SK-N-SH (cell line): ENCODE measurements at regions of chr12 and their contacts with region 1.

Region 1: DNA sequence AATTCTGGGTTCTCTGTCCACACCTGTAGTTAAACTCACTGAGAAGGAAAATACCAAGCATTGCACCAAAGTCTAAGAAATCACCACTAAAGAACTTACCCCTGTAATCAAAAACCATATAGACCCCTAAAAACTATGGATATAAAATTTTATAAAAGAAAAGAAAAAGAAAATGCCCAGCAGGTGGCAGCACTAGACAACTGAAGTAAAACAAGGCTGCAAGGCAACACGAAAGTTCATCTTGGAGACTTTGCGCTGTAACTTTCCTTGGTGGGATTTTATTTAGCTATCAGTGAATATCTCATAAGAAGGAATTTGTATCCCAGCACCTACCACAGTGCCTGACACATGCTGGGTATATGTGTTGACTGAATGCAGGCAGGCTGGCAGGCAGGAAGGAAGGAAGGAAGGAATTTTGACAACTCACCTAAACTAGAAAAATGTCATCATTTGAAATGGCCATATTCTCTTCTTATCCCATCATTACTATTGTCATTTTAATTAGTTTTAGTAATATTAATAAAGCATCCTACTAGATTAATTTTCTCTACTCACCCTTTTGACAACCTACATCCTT is 68.2 kb upstream of the ETV6 start:
- DNase-seq: peak; percentile 51
- H3K4me3 ChIP-seq: no peak overlapping the region; a peak in 1 of 4 replicates
- H3K27ac ChIP-seq: no peak overlapping the region
- H3K4me1 ChIP-seq: peaks cover 0 to 13% of the 10 kb centered on the region in 2 experiments; a peak in 1 of 4 replicates
- H3K27me3 ChIP-seq: no peaks in the 10 kb centered on the region
- CTCF ChIP-seq: peak; percentile 67
- EP300 ChIP-seq: no peak
- RAD21 ChIP-seq: peak; percentile 95

Region 2: GRCh38 chr12:11595080-11595479 is 13.8 kb after region 1 on chr12:
- CTCF ChIA-PET with region 1: interaction called, 12 read pairs
- POLR2A ChIA-PET with region 1: no interaction called
- DNase-seq: no peak
- H3K4me3 ChIP-seq: no peak overlapping the region
- H3K27ac ChIP-seq: no peak overlapping the region
- H3K4me1 ChIP-seq: peaks cover under 1 to 2% of the 10 kb centered on the region in 2 experiments; a peak in 2 of 4 replicates
- H3K27me3 ChIP-seq: no peaks in the 10 kb centered on the region
- CTCF ChIP-seq: no peak
- EP300 ChIP-seq: no peak
- RAD21 ChIP-seq: no peak